Activated naive CD4-positive, alpha-beta T cell treated with anti-CD3 and anti-CD28 coated beads for 36 hours (primary cell): ENCODE measurements at regions of chr11 and their contacts with region 1.

Region 1: GRCh38 chr11:64317957-64318693 is at the start of gene PRDX5:
- DNase-seq: peak; percentile 94
- H3K4me3 Mint-ChIP-seq: peak within 1 kb of the TSS; percentile 94
- H3K27ac Mint-ChIP-seq: peak within 1 kb of the TSS; percentile 99
- H3K4me1 Mint-ChIP-seq: peaks cover 33% of the 10 kb centered on the region
- H3K27me3 Mint-ChIP-seq: no peaks in the 10 kb centered on the region
- total RNA-seq, gene PRDX5: 122 to 132 TPM

Region 2: DNA sequence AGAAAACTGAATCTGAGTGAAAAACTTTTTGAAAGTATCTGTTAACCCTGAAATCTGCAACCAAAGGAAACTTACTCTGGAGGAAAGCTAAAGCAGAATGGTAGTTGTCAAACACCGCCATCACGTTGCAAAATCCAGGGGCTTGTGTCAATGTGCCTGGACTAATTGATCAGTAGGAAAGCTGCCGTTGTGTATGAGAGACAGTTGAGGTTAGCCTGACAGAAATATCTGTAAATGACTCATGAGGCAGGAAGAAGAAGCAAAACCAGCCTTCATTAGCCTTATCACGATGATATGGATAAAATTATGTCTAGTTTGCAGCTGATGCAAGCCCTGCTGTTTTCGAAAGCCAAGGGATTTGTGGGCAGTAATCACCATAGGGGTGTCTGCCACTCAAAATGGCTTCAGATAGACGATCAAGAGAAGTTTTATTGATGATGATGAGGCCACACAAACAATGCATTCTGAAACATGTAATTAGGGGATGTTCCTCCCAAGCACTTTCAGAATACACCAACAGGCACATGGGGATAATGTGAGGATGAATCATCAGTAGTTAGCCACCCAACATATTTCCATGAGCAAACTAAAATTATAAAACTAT is 1890.4 kb before region 1 on chr11:
- CTCF ChIA-PET with region 1: no interaction called
- intact Hi-C with region 1: no loop called
- DNase-seq: peak; percentile 28
- H3K4me3 Mint-ChIP-seq: peak overlapping the region; percentile 0
- H3K27ac Mint-ChIP-seq: peak overlapping the region; percentile 54
- H3K4me1 Mint-ChIP-seq: peaks cover 28% of the 10 kb centered on the region
- H3K27me3 Mint-ChIP-seq: no peaks in the 10 kb centered on the region

Region 3: GRCh38 chr11:64269380-64270234 is 48.5 kb before region 1 on chr11:
- CTCF ChIA-PET with region 1: interaction called, 3 read pairs
- intact Hi-C with region 1: loop called (anchors 1 kb)
- DNase-seq: peak; percentile 98
- H3K4me3 Mint-ChIP-seq: peak overlapping the region; percentile 90
- H3K27ac Mint-ChIP-seq: peak overlapping the region; percentile 88
- H3K4me1 Mint-ChIP-seq: peaks cover 15% of the 10 kb centered on the region
- H3K27me3 Mint-ChIP-seq: no peaks in the 10 kb centered on the region

Region 4: GRCh38 chr11:64331557-64332371 is 13.6 kb after region 1 on chr11:
- CTCF ChIA-PET with region 1: interaction called, 22 read pairs
- intact Hi-C with region 1: loop called (anchors 1 kb)
- DNase-seq: peak; percentile 82
- H3K4me3 Mint-ChIP-seq: no peak overlapping the region
- H3K27ac Mint-ChIP-seq: no peak overlapping the region
- H3K4me1 Mint-ChIP-seq: peaks cover 10% of the 10 kb centered on the region
- H3K27me3 Mint-ChIP-seq: no peaks in the 10 kb centered on the region

Region 5: GRCh38 chr11:64352995-64353714 is 35.0 kb after region 1 on chr11:
- CTCF ChIA-PET with region 1: interaction called, 12 read pairs
- intact Hi-C with region 1: loop called (anchors 1 kb)
- DNase-seq: no peak
- H3K4me3 Mint-ChIP-seq: no peak overlapping the region
- H3K27ac Mint-ChIP-seq: no peak overlapping the region
- H3K4me1 Mint-ChIP-seq: peaks cover 13% of the 10 kb centered on the region
- H3K27me3 Mint-ChIP-seq: no peaks in the 10 kb centered on the region

Region 6: DNA sequence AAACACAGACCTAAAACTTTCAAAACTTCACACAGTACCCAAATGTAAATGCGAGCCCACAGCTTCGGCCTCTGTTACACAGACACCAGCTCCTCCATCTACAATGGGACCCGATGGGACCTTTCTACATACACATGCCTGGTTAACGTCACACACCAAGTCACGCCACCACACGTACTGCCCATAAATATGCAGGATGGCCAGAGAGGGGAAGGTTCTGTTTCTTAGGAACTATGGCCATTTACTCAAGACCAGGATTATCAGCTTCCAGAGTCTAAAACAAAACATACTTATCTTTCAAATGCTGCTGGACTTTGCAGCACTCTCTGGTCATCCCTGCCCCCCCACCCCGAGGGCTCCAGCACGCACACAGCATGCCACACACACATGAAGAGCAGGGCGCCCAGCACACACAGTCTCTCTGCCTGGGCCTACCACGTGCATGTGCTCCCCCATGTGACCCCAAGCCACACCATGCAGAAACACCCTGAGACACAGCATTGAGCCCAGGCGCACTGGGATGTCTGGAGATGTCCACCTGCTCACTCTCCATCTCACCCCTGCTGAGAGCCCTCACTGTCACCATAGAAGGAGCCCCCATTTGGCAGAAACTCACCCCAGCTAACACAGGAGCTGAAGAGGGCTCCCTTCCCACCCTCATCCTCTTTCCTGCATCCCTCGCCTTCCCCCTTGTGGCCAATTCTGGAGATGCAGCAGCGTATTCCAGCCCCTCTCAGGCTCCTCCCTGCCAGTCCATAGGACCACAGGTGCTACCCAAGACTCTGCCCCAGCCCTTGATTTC is 334.7 kb after region 1 on chr11:
- CTCF ChIA-PET with region 1: no interaction called
- intact Hi-C with region 1: loop called (anchors 1 kb)
- DNase-seq: peak; percentile 88
- H3K4me3 Mint-ChIP-seq: no peak overlapping the region
- H3K27ac Mint-ChIP-seq: no peak overlapping the region
- H3K4me1 Mint-ChIP-seq: no peaks in the 10 kb centered on the region
- H3K27me3 Mint-ChIP-seq: no peaks in the 10 kb centered on the region